MCF 10A (cell line): ENCODE measurements at regions of chr12 and their contacts with region 1.

Region 1: DNA sequence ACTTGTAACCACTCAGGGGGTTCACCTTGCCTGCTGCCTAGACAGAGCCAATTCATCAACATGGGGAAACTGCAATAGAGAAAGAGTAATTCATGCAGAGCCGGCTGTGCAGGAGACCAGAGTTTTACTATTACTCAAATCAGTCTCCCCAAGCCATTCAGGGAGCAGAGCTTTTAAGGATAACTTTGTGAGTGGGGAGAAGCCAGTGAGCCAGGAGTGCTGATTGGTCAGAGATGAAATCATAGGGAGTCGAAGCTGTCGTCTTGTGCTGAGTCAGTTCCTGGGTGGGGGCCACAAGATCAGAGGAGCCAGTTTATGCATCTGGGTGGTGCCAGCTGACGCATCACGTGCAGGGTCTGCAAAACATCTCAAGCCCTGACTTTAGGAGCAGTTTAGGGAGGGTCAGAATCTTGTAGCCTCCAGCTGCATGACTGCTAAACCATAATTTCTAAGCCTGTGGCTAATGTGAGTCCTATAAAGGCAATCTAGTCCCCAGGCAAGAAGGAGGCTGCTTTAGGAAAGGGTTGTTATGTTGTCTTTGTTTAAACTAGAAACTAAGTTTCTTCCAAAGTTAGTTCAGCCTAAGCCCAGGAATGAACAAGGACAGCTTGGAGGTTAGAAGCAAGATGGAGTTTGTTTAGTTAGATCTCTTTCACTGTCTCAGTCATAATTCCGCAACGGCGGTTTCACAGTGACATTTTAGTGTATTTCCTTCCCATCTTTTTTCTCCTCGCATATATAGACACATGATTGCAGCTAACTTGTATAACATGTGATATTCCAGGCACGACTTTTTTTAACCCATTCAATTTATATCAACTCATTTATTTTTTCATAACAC is 68.9 kb upstream of the NCOR2 start:
- DNase-seq: peak; percentile 67
- H3K4me3 Mint-ChIP-seq: no peak overlapping the region
- H3K27ac Mint-ChIP-seq: peak overlapping the region; percentile 59
- H3K4me1 Mint-ChIP-seq: peaks cover 56% of the 10 kb centered on the region
- H3K27me3 Mint-ChIP-seq: no peaks in the 10 kb centered on the region
- CTCF ChIP-seq: no peak

Region 2: DNA sequence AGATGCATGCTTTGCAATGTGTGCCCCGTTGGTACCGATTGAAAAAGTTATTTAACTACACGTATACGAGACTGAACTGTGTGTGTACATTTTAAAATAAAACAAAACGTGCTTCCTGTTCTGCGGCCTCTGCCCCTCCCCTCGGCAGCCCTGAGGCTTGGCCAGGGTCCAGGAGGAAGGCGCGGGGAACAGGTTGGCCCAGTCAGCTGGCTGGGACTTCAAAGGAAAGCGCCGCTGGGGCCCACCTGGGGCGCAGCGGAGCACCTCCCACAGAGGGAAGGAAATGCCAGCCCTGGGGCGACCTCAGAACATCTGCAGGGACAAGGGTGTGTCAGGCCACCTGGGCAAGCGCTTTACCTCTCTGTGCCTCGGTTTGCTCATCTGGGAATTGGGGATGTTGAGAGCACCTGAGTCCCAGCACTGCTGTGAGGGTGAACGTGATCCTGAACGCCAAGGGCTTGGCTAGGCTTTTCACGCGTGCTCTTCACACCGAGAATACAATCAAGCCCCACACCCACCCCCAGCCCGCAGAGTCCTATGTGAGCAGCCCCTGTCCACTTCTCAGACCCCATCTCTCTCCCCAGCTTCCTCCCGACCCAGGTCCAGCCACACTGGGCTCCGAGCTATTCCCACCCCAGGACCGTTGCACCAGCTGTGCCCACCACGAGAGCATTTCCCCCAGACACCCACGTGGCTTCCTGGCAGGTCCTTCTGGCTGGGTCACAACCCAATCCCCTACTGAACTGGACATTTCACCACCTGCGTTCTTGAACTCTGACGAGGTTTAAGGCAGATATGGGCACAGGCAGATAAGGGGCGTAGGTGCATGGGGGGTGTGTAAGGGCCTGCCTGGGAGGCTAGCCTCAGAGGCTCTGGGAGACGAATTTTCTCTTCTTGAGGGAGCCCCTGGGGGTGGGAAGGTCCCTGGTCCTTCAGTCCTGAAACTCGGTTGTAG is 27.0 kb before region 1 on chr12:
- CTCF ChIA-PET with region 1: interaction called, 4 read pairs
- POLR2A ChIA-PET with region 1: interaction called, 6 read pairs
- intact Hi-C with region 1: loop called (anchors 1 kb)
- DNase-seq: peak; percentile 90
- H3K4me3 Mint-ChIP-seq: peak overlapping the region; percentile 38
- H3K27ac Mint-ChIP-seq: peak overlapping the region; percentile 66
- H3K4me1 Mint-ChIP-seq: peaks cover 23% of the 10 kb centered on the region
- H3K27me3 Mint-ChIP-seq: no peaks in the 10 kb centered on the region
- CTCF ChIP-seq: no peak

Region 3: GRCh38 chr12:124620751-124621660 is 15.4 kb before region 1 on chr12:
- CTCF ChIA-PET with region 1: interaction called, 4 read pairs
- POLR2A ChIA-PET with region 1: interaction called, 17 read pairs
- intact Hi-C with region 1: no loop called
- DNase-seq: no peak
- H3K4me3 Mint-ChIP-seq: peak overlapping the region; percentile 16
- H3K27ac Mint-ChIP-seq: peak overlapping the region; percentile 67
- H3K4me1 Mint-ChIP-seq: peaks cover 32% of the 10 kb centered on the region
- H3K27me3 Mint-ChIP-seq: no peaks in the 10 kb centered on the region
- CTCF ChIP-seq: no peak

Region 4: DNA sequence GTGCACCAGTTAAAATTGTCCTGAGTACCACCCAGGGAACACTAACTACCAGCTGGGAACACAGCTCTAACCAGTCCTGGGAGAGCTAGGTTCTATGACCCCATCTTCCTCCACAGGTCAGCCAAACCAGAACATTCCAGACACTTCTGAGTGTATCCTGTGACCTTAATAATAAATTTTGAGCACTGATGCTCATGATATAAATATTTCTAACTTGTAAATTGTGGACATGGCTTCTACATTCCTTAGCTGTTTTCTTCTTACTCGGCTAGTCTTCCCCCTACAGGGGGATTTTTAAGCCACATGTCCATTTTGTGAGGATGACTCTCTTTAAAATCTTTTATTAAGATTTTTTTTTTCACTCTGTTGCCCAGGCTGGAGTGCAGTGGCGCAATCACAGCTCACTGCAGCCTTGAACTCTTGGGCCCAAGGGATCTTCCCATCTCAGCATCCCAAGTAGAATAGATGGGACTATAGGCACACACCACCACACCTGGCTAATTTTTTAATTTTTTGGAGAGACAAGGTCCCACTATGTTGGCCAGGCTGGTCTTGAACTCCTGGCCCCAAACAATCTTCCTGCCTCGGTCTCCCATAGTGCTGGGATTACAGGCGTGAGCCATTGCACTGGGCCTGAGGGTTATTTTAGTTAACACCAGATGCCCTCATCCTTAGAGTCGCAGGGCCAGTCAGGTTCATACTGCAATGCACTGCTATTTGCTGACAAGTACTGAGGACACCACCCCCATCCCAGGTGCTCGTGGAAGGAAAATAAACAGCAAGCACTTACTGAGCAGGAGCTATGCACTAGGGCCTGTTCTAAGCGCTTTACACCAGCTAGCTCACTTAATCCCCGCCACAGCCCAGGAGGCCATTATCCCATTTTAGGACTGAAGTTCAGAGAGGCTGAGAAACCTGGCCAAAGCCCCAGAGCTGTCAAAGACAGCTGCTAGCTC is 73.6 kb after region 1 on chr12:
- CTCF ChIA-PET with region 1: no interaction called
- POLR2A ChIA-PET with region 1: no interaction called
- intact Hi-C with region 1: no loop called
- DNase-seq: no peak
- H3K4me3 Mint-ChIP-seq: no peak overlapping the region
- H3K27ac Mint-ChIP-seq: no peak overlapping the region
- H3K4me1 Mint-ChIP-seq: peaks cover 3% of the 10 kb centered on the region
- H3K27me3 Mint-ChIP-seq: no peaks in the 10 kb centered on the region
- CTCF ChIP-seq: no peak